T-cell (primary cell): ENCODE measurements at regions of chr5 and their contacts with region 1.

Region 1: GRCh38 chr5:93573354-93574351 is 7.4 kb downstream of the NR2F1-AS1 start:
- DNase-seq: no peak
- ATAC-seq: no peak
- H3K4me3 ChIP-seq: no peak overlapping the region
- H3K4me3 Mint-ChIP-seq: no peak overlapping the region
- H3K27ac ChIP-seq: no peak overlapping the region
- H3K27ac Mint-ChIP-seq: peak overlapping the region in 1 of 2 donors; percentile 74
- H3K4me1 ChIP-seq: peaks cover 4 to 32% of the 10 kb centered on the region in 2 experiments
- H3K4me1 Mint-ChIP-seq: peaks cover 19 to 32% (median 30%) of the 10 kb centered on the region in 3 donors
- H3K27me3 ChIP-seq: peaks cover 39 to 67% of the 10 kb centered on the region in 2 experiments
- H3K27me3 Mint-ChIP-seq: peaks cover 85 to 92% of the 10 kb centered on the region in 2 donors

Region 2: DNA sequence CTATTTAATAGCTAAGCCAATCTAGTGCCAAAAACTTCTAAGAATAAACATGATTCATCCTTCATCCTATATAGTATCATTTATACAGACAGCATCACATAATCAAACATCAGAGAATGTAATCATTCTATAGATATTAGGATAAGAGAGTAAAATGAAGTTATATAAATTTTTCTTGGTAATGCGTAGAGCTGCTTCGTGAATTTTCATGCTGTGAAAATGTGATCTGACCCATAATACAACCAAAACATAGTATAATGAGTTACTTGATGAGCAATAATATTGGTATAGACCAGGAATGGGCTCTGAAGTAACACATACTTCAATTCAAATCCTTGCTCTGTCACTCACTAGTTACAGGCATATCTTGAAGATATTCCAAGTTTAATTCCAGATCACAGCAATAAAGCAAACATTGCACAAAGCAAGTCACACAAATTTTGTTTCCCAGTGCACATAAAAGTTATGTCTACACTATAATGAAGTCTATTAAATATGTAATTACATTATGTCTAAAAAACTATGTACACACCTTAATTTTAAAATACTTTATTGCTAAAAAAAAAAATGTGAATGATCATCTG is 16.5 kb before region 1 on chr5:
- CTCF ChIA-PET with region 1: no interaction called
- POLR2A ChIA-PET with region 1: no interaction called
- DNase-seq: no peak
- ATAC-seq: no peak
- H3K4me3 ChIP-seq: no peak overlapping the region
- H3K4me3 Mint-ChIP-seq: no peak overlapping the region
- H3K27ac ChIP-seq: no peak overlapping the region
- H3K27ac Mint-ChIP-seq: no peak overlapping the region
- H3K4me1 ChIP-seq: no peaks in the 10 kb centered on the region
- H3K4me1 Mint-ChIP-seq: no peaks in the 10 kb centered on the region
- H3K27me3 ChIP-seq: peaks cover 2 to 11% of the 10 kb centered on the region in 2 experiments
- H3K27me3 Mint-ChIP-seq: peaks cover 21 to 29% of the 10 kb centered on the region in 2 donors

Region 3: GRCh38 chr5:93607367-93608258 is 34.0 kb after region 1 on chr5:
- CTCF ChIA-PET with region 1: no interaction called
- POLR2A ChIA-PET with region 1: interaction called in 1 of 2 experiments, 10 read pairs
- DNase-seq: peak in 8 of 35 experiments; percentile 25 to 68 (median 30)
- ATAC-seq: peak; percentile 57 to 79 (median 64)
- H3K4me3 ChIP-seq: no peak overlapping the region
- H3K4me3 Mint-ChIP-seq: peak overlapping the region in 1 of 3 donors; percentile 40
- H3K27ac ChIP-seq: no peak overlapping the region
- H3K27ac Mint-ChIP-seq: no peak overlapping the region
- H3K4me1 ChIP-seq: peaks cover 2 to 17% of the 10 kb centered on the region in 2 experiments
- H3K4me1 Mint-ChIP-seq: peaks cover 17 to 22% (median 21%) of the 10 kb centered on the region in 3 donors
- H3K27me3 ChIP-seq: peaks cover 46 to 55% of the 10 kb centered on the region in 2 experiments
- H3K27me3 Mint-ChIP-seq: peaks cover 80 to 81% of the 10 kb centered on the region in 2 donors

Region 4: GRCh38 chr5:93794954-93795353 is 221.3 kb after region 1 on chr5:
- CTCF ChIA-PET with region 1: no interaction called
- POLR2A ChIA-PET with region 1: no interaction called
- DNase-seq: peak in 1 of 35 experiments; percentile 0
- ATAC-seq: no peak
- H3K4me3 ChIP-seq: no peak overlapping the region
- H3K4me3 Mint-ChIP-seq: no peak overlapping the region
- H3K27ac ChIP-seq: no peak overlapping the region
- H3K27ac Mint-ChIP-seq: no peak overlapping the region
- H3K4me1 ChIP-seq: no peaks in the 10 kb centered on the region
- H3K4me1 Mint-ChIP-seq: peaks cover 0 to 6% (median 0%) of the 10 kb centered on the region in 3 donors
- H3K27me3 ChIP-seq: no peaks in the 10 kb centered on the region
- H3K27me3 Mint-ChIP-seq: no peaks in the 10 kb centered on the region